Aorta (tissue), 5 donors: ENCODE measurements at regions of chrX and their contacts with region 1.

Region 1: DNA sequence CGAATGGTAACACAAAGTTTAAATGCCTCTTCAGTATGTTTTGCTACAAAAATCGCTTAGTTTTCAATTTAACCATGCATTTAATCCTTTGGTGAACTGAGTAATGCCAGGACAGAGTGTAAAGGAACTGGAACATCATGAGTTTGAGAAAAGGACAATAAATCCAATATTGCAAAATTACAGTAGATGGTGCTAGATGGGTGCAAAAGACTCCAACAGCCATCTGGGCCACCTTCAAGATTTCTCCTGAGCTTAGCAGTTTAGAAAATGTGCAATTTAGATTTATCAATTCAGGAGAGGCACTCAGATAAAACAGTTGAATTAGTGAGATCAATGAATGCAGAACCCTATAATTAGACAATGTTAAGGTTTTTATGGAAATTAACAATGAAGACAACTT is 33.2 kb upstream of the MID1IP1 start:
- DNase-seq: no peak
- ATAC-seq: no peak
- H3K4me3 ChIP-seq: no peak overlapping the region
- H3K27ac ChIP-seq: no peak overlapping the region
- H3K4me1 ChIP-seq: no peaks in the 10 kb centered on the region
- H3K27me3 ChIP-seq: no peaks in the 10 kb centered on the region

Region 2: GRCh38 chrX:38732866-38733265 is 35.2 kb before region 1 on chrX:
- intact Hi-C with region 1: no loop called
- DNase-seq: no peak
- ATAC-seq: no peak
- H3K4me3 ChIP-seq: no peak overlapping the region
- H3K27ac ChIP-seq: no peak overlapping the region
- H3K4me1 ChIP-seq: no peaks in the 10 kb centered on the region
- H3K27me3 ChIP-seq: no peaks in the 10 kb centered on the region

Region 3: GRCh38 chrX:38985375-38985774 is 217.3 kb after region 1 on chrX:
- intact Hi-C with region 1: loop called (anchors 5 to 10 kb)
- DNase-seq: no peak
- ATAC-seq: no peak
- H3K4me3 ChIP-seq: no peak overlapping the region
- H3K27ac ChIP-seq: no peak overlapping the region
- H3K4me1 ChIP-seq: no peaks in the 10 kb centered on the region
- H3K27me3 ChIP-seq: no peaks in the 10 kb centered on the region

Region 4: GRCh38 chrX:39149761-39150160 is 381.7 kb after region 1 on chrX:
- intact Hi-C with region 1: loop called in 1 of 2 experiments (anchors 5 kb)
- DNase-seq: peak; percentile 81 to 90
- ATAC-seq: peak; percentile 63
- H3K4me3 ChIP-seq: no peak overlapping the region
- H3K27ac ChIP-seq: no peak overlapping the region
- H3K4me1 ChIP-seq: no peaks in the 10 kb centered on the region
- H3K27me3 ChIP-seq: no peaks in the 10 kb centered on the region

Region 5: GRCh38 chrX:39174772-39175417 is 406.8 kb after region 1 on chrX:
- intact Hi-C with region 1: no loop called
- DNase-seq: peak in 1 of 2 donors; percentile 60
- ATAC-seq: no peak
- H3K4me3 ChIP-seq: no peak overlapping the region
- H3K27ac ChIP-seq: no peak overlapping the region
- H3K4me1 ChIP-seq: no peaks in the 10 kb centered on the region
- H3K27me3 ChIP-seq: no peaks in the 10 kb centered on the region